ENCODE measurements at regions of chr4 and their contacts with region 1.

Region 1: GRCh38 chr4:153344131-153345010 is at the start of gene MND1:
- DNase-seq: peak; percentile 57 to 95 (median 90)

Region 2: GRCh38 chr4:153142700-153143438 is 201.5 kb before region 1 on chr4:
- intact Hi-C with region 1: loop called (anchors 5 kb)
- DNase-seq: peak; percentile 57 to 92 (median 81)

Region 3: GRCh38 chr4:153471691-153472080 is 127.3 kb after region 1 on chr4:
- intact Hi-C with region 1: loop called (anchors 10 kb)
- DNase-seq: no peak

Region 4: GRCh38 chr4:153573881-153574802 is 229.8 kb after region 1 on chr4:
- intact Hi-C with region 1: loop called (anchors 2 kb)
- DNase-seq: peak; percentile 56 to 94 (median 80)

Region 5: DNA sequence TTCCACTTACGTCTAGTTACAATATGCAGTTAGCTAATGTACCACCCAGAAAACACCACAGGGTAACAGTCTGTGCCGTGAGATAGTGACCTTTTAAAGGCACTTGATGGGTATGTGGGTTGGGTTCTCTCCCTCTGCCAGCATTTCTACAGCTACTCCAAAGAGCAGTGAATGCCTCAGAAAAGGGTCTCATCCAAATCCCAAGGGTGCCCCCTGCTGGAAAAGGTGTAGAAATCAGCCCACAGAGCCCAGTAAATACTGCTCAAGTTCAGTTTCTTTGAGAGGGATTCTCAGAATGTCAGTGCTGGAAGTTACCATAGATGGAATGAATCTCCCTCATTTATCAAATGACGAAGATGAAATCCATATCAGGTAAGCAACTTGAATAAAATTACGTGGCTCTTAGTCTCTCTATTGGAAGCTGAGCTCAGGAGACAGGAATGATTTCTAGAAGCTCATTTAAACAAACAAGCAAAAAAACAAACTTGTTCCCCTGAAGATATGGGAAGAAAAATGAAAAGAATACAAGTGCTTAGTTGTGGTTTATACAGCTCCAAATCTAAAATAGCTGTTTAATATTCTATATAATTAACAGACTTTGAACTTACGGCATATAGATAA is 405.9 kb after region 1 on chr4:
- intact Hi-C with region 1: loop called (anchors 10 kb)
- DNase-seq: peak in 41 of 42 donors; percentile 41 to 86 (median 72)

Measured in head of caudate nucleus (tissue), 42 donors.